ENCODE measurements at regions of chr6 and their contacts with region 1.

Region 1: DNA sequence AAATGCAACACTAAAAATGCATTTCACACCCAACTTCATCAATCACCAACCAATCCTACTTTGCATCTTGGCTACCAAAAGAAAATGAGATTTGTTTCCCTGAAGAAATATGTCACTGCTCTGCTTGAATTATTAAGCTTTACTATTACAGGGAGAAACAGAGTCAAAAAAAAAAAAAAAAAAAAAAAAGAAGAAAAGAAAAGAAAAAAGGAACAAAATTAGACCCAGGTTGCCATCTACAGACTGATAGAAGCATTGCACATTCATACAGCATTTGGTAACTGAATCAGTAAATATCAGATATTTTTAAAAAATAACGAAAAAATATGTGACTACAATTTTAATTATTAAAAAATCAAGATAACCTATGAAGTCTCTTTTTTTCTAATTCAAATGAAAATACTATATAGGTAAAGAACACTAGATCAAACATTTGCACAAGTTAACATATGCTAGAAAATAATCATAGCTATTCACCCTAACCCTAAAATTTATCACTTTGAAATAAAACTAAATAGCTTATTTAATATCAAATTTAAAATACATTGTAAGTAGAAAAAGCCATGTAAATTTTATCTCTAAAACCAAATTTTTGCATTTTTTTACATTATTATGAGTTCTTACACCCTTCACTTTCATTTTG is 83.3 kb downstream of the DCDC2 start:
- DNase-seq: no peak
- H3K4me3 ChIP-seq: no peak overlapping the region
- H3K27ac ChIP-seq: no peak overlapping the region
- H3K4me1 ChIP-seq: no peaks in the 10 kb centered on the region
- H3K27me3 ChIP-seq: no peaks in the 10 kb centered on the region
- CTCF ChIP-seq: peak; percentile 29 to 63 (median 48)
- EP300 ChIP-seq: no peak
- POLR2A ChIP-seq: no peak

Region 2: DNA sequence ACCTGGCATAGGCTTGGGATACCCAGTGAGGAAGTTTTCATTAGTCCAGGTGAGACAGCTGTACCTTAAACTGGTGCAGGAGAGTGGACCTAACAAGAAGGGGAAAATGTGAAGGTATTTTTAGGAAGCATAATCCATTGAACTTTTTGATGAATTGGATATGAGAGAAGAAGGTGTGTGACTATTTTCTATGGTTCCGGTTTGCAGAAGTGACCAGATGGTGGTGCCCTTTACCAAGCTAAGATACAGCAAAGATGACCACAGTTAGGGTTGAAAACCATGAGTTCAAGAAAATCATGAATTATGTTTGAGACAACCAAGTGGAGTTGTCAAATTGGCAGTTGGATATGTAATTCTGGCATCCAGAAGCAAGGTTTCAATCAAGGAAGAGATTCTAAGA is 210.5 kb before region 1 on chr6:
- intact Hi-C with region 1: loop called (anchors 10 kb)
- DNase-seq: no peak
- H3K4me3 ChIP-seq: no peak overlapping the region
- H3K27ac ChIP-seq: no peak overlapping the region
- H3K4me1 ChIP-seq: no peaks in the 10 kb centered on the region
- H3K27me3 ChIP-seq: no peaks in the 10 kb centered on the region
- CTCF ChIP-seq: peak in 2 of 3 experiments; percentile 27
- EP300 ChIP-seq: no peak
- POLR2A ChIP-seq: no peak